ENCODE measurements at regions of chr12 and their contacts with region 1.

Region 1: DNA sequence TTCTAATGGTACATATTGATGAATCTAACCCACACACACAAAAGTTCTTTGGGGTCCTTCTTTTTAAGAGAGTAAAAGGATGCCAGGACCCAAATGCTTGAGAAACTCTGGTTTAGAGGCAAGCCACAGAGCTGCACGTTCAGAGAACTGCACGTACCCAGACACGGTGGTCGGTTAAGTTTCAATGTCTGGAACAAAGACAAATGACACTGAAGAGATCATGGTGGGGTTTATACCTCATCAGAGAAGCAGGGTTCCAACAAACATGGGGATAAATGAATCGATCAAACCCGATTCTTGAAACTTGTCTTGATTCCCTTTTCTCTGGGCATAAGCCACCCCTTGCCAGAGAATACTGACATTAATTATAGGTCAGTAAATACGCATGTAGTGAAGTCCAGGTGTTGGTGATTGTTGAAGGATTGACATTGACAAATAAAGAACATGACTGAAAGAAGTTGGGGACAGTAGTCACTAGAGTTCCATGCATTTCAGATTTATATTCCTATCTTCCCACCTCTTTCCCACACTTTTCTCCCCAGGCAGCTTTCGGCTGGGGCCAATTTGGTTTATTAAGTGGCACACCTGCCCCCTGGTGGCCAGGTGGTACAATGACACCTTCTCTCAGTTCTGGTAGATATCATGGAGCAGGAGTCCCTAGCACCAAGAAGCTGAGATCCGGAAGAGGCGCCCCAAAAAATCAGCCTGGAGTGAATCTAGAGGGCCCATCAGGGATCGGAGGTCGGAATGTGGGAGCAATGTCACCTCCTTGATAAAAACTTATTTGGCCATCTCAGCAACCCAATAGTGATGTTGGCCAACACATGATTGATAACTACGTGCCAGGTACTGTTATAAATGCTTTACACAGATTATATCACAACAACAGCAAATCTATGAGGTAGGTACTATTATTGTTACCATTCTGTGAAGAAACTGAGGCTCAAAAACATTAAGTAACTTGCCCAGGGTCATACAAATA is 17.8 kb upstream of the HDAC7 start:
- DNase-seq: no peak
- H3K4me3 Mint-ChIP-seq: no peak overlapping the region
- H3K27ac Mint-ChIP-seq: no peak overlapping the region
- H3K4me1 Mint-ChIP-seq: peaks cover 49% of the 10 kb centered on the region
- H3K27me3 Mint-ChIP-seq: no peaks in the 10 kb centered on the region

Region 2: GRCh38 chr12:47449797-47450196 is 387.7 kb before region 1 on chr12:
- intact Hi-C with region 1: no loop called
- DNase-seq: no peak
- H3K4me3 Mint-ChIP-seq: no peak overlapping the region
- H3K27ac Mint-ChIP-seq: no peak overlapping the region
- H3K4me1 Mint-ChIP-seq: no peaks in the 10 kb centered on the region
- H3K27me3 Mint-ChIP-seq: peaks cover 8% of the 10 kb centered on the region

Region 3: GRCh38 chr12:47779301-47779942 is 58.1 kb before region 1 on chr12:
- intact Hi-C with region 1: loop called (anchors 2 kb)
- DNase-seq: peak; percentile 85
- H3K4me3 Mint-ChIP-seq: no peak overlapping the region
- H3K27ac Mint-ChIP-seq: no peak overlapping the region
- H3K4me1 Mint-ChIP-seq: peaks cover 27% of the 10 kb centered on the region
- H3K27me3 Mint-ChIP-seq: no peaks in the 10 kb centered on the region

Region 4: DNA sequence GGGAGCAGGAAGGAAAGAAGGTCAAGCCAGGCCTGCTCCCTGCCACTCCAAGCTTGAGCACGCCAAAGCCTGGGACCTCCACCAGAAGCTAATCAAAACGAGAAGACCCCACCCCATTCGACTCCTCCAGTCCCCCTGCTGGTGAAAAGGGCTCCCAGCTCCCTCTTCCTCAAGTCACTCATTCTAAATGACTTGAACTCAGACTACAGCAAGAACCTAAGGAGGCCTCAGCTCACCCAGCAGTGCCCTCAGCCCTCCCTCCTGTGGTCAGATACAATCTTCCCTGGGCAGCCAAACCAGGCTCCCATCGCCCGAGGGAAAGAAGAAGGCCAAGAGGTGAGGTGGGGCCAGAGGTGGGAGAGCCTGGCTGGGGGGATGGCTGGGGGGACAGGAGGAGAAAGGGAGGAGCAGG is 35.2 kb before region 1 on chr12:
- intact Hi-C with region 1: loop called (anchors 5 kb)
- DNase-seq: no peak
- H3K4me3 Mint-ChIP-seq: peak overlapping the region; percentile 37
- H3K27ac Mint-ChIP-seq: peak overlapping the region; percentile 96
- H3K4me1 Mint-ChIP-seq: peaks cover 67% of the 10 kb centered on the region
- H3K27me3 Mint-ChIP-seq: no peaks in the 10 kb centered on the region

Measured in activated T-helper 2 cell treated with anti-CD3 and anti-CD28 coated beads, Interferon-gamma antibody, Interleukin-2, Interleukin-4, amounts not matched to agents 10 μg/mL and 5 μg/mL and 100 μg/mL, durations not matched to agents 14 hours and 24 hours and 36 hours (primary cell).